ENCODE measurements at regions of chr13 and their contacts with region 1.

Region 1: DNA sequence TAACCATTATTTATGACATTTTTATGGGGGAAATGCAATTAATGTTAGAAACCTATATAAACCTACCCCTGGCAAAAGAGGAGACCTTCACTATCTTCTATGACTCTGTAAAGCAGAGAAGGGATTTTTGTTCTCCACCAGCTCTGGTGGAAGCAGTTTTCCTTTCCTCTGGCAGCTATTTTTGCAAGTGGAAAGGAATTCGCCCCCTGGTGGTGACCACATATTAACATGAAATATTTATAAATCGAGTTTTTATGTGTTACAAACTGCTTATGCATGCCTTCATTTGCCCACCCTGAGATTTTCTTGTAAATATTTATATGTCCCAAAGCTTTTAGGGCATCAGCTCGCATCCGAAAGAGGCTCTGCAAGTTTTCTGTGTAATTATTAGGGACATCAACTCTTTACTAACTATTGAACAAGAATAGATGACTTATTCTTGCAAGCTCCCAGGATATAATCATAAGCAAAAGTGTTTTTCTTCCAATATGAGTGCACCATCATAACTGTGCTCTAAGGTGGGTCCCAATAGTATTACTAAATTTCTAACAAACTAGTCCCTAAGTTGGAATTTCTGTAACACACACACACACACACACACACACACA is 62.4 kb downstream of the SERTM1 start:
- DNase-seq: no peak
- H3K4me3 ChIP-seq: no peak overlapping the region
- H3K27ac ChIP-seq: no peak overlapping the region
- H3K4me1 ChIP-seq: no peaks in the 10 kb centered on the region
- H3K27me3 ChIP-seq: no peaks in the 10 kb centered on the region
- CTCF ChIP-seq: peak; percentile 36 to 66 (median 61)

Region 2: GRCh38 chr13:35144166-35144890 is 1591.9 kb before region 1 on chr13:
- intact Hi-C with region 1: no loop called
- DNase-seq: no peak
- H3K4me3 ChIP-seq: no peak overlapping the region
- H3K27ac ChIP-seq: no peak overlapping the region
- H3K4me1 ChIP-seq: no peaks in the 10 kb centered on the region
- H3K27me3 ChIP-seq: no peaks in the 10 kb centered on the region
- CTCF ChIP-seq: no peak

Region 3: DNA sequence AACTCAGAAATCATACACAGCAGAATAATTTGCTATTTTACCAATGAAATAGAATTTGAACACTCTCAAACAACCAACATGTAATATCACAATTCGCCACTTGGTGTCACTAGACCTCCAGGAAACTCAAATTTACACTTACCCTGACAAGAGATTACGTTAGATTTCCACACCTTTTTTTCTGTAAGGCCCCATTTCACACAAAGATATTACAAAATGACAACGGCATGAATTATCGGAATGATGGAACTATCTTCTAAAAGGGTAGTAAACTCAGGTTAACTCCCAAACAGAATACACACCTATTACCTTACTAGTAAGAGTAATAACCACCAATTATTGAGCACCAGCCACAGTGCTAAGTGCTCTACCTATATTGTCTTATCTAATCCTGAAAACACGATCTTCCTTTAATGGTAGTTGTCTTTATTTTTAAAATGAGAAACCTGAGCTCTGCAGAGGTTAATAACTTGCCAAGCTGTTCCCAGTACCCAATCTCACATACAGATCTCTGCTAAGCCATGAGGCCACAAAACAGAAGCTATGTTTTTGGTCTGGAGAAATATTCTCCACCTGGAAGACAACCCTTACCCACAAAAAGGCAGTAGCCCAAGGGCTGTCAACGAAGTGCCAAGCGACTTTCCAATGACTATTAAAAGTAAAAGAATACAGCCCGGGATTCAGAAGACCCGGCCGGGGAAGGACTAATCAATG is 757.5 kb before region 1 on chr13:
- intact Hi-C with region 1: loop called (anchors 2 kb)
- DNase-seq: no peak
- H3K4me3 ChIP-seq: no peak overlapping the region
- H3K27ac ChIP-seq: peak overlapping the region; percentile 69 to 71
- H3K4me1 ChIP-seq: peaks cover 0 to 7% of the 10 kb centered on the region in 2 donors
- H3K27me3 ChIP-seq: no peaks in the 10 kb centered on the region
- CTCF ChIP-seq: peak; percentile 46 to 75 (median 73)

Region 4: GRCh38 chr13:36282818-36283445 is 453.3 kb before region 1 on chr13:
- intact Hi-C with region 1: loop called (anchors 5 kb)
- DNase-seq: no peak
- H3K4me3 ChIP-seq: no peak overlapping the region
- H3K27ac ChIP-seq: no peak overlapping the region
- H3K4me1 ChIP-seq: no peaks in the 10 kb centered on the region
- H3K27me3 ChIP-seq: no peaks in the 10 kb centered on the region
- CTCF ChIP-seq: peak; percentile 49 to 80 (median 77)

Region 5: DNA sequence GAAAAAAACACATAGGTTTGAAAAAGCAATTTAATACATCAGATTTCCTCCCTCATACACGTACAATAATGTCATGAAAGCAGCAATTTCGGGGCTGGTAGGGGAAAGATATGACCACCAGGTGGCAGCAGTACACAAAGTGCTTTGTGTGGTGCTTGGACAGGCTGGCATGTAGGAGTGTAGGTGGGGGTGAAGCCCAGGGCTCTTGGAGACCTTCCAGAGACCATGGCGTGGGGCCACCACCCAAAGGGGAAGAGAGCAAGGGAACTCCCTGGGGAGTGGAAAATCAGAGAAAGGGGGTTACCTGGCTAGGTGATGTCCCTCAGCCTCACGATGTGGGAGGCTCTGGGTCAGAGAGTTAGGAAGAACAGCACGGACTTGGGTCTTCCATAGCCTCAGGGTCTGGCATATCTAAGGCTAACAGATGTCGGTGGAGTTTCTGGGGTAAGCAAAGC is 315.8 kb before region 1 on chr13:
- intact Hi-C with region 1: loop called (anchors 2 kb)
- DNase-seq: peak in 1 of 2 donors; percentile 82
- H3K4me3 ChIP-seq: no peak overlapping the region
- H3K27ac ChIP-seq: no peak overlapping the region
- H3K4me1 ChIP-seq: no peaks in the 10 kb centered on the region
- H3K27me3 ChIP-seq: no peaks in the 10 kb centered on the region
- CTCF ChIP-seq: peak; percentile 25 to 82 (median 81)

Measured in ascending aorta (tissue), 2 donors.